PC-9 (cell line): ENCODE measurements at regions of chr12 and their contacts with region 1.

Region 1: GRCh38 chr12:111599459-111600204 is 517 bp upstream of the ATXN2 start:
- DNase-seq: peak; percentile 87 to 93
- H3K4me3 ChIP-seq: peak overlapping the region; percentile 98
- H3K27ac ChIP-seq: peak overlapping the region; percentile 94
- H3K4me1 ChIP-seq: peaks cover 46% of the 10 kb centered on the region
- H3K27me3 ChIP-seq: no peaks in the 10 kb centered on the region
- CTCF ChIP-seq: no peak

Region 2: DNA sequence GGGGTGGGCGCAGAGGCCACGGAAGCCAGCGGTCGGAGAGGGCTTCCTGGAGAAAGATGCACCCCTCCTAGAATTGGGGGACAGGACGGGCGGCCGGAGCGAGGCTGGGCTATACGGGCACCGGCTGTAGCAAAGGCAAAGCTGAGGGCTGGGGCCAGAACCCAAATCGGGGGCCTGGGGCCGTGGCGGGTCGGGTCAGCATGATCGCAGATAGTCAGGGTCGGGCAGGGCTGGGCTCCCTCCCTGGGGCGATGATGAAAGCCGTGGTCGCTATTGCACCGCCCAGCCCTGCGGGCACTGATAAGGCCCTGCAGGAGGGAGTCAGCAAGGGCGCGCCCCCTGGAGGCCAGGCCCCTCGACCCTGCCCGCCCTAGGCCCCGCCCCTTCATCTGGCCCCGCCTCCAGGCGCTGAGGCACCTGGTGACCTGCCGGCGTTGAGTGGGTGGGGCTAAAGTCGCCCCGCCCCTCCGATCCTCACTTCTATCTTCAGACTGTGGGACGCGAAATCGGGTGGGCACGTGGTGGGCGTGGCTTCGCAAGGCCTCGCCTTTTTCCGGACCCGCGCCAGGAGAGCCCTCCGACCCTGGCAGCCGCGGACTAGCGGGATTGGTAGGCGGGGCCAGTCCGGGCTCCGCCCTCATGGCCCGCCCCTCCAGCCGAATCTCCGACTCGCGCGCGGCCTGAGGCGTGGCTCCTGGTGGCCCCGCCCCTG is 194.3 kb before region 1 on chr12:
- CTCF ChIA-PET with region 1: no interaction called
- POLR2A ChIA-PET with region 1: no interaction called
- intact Hi-C with region 1: no loop called
- DNase-seq: peak; percentile 80 to 97
- H3K4me3 ChIP-seq: peak overlapping the region; percentile 97
- H3K27ac ChIP-seq: 0 out of 2 replicates have a peak overlapping the region, but pooled peaks have one; percentile 30
- H3K4me1 ChIP-seq: peaks cover 49% of the 10 kb centered on the region
- H3K27me3 ChIP-seq: no peaks in the 10 kb centered on the region
- CTCF ChIP-seq: peak; percentile 65

Region 3: GRCh38 chr12:111529424-111530368 is 69.9 kb before region 1 on chr12:
- CTCF ChIA-PET with region 1: no interaction called
- POLR2A ChIA-PET with region 1: no interaction called
- intact Hi-C with region 1: loop called (anchors 10 kb)
- DNase-seq: peak in 1 of 2 experiments; percentile 29
- H3K4me3 ChIP-seq: no peak overlapping the region
- H3K27ac ChIP-seq: 0 out of 2 replicates have a peak overlapping the region, but pooled peaks have one; percentile 7
- H3K4me1 ChIP-seq: no peaks in the 10 kb centered on the region
- H3K27me3 ChIP-seq: no peaks in the 10 kb centered on the region
- CTCF ChIP-seq: peak; percentile 72

Region 4: DNA sequence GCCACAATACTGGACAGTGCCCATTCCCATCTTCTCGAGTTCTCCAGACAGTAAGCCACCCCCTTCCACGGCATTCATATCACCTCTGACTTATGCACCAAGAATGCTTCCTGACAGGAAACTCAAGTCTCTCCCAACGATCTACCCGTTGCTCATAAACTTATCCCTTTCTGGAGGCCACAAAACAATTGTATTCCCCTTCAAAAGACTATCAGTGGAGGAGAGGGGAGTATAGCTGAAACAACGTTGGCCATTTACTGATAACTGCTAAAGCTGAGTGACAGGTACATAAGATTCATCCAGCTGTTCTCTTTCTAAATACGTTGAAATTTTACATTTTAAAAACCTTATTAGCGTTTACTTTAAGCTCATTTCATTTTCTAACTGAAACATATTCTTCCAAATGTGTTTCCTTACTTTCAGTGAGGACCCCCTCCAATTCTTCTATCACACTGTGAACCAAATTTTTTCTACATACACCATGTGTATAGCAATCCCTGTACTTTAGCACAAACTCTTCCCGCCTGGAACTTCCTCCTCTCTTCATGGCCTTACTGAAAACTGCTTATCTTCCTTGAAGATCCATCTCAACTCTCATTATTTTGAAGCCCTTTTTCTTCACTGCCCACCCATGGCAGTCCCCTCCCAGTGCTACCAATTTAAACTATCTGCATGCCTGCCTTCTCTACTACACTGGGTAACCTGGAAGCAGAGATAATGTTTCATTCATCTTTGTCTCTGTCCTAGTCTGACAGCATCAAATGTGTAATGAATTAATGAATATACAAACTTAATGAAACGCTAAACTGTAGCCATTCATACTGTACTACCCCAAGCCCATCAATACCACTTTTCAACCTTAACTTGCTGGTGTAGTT is 29.3 kb before region 1 on chr12:
- CTCF ChIA-PET with region 1: interaction called, 4 read pairs
- POLR2A ChIA-PET with region 1: interaction called, 4 read pairs
- intact Hi-C with region 1: loop called (anchors 2 kb)
- DNase-seq: peak; percentile 66 to 94
- H3K4me3 ChIP-seq: peak overlapping the region; percentile 4; the same call in 1 of the 2 replicates
- H3K27ac ChIP-seq: peak overlapping the region; percentile 74
- H3K4me1 ChIP-seq: peaks cover 52% of the 10 kb centered on the region
- H3K27me3 ChIP-seq: no peaks in the 10 kb centered on the region
- CTCF ChIP-seq: no peak

Region 5: GRCh38 chr12:111624540-111624939 is 24.9 kb after region 1 on chr12:
- CTCF ChIA-PET with region 1: no interaction called
- POLR2A ChIA-PET with region 1: no interaction called
- intact Hi-C with region 1: loop called (anchors 2 kb)
- DNase-seq: peak; percentile 75 to 94
- H3K4me3 ChIP-seq: no peak overlapping the region
- H3K27ac ChIP-seq: peak overlapping the region; percentile 86
- H3K4me1 ChIP-seq: peaks cover 22% of the 10 kb centered on the region
- H3K27me3 ChIP-seq: no peaks in the 10 kb centered on the region
- CTCF ChIP-seq: no peak

Region 6: DNA sequence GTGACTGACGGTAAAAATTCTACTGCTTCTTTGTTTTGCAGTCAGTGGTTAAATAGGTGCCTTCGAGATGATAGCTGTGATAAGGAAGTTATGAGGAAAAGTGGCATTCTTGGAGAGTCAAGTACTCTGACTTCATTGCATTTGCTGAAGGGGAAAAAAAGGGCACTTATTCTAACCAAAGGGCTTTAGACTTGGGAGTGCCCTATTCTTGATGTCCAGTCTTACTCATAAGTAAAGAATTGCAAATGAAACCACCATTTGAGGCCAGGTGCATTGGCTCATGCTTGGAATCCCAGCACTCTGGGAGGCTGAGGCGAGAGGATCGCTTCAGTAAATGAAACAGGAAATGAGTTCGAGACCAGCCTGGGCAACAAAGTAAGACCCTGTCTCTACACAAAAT is 45.8 kb after region 1 on chr12:
- CTCF ChIA-PET with region 1: no interaction called
- POLR2A ChIA-PET with region 1: interaction called, 5 read pairs
- intact Hi-C with region 1: loop called (anchors 1 kb)
- DNase-seq: peak; percentile 68 to 99
- H3K4me3 ChIP-seq: no peak overlapping the region
- H3K27ac ChIP-seq: peak overlapping the region; percentile 88
- H3K4me1 ChIP-seq: peaks cover 28% of the 10 kb centered on the region
- H3K27me3 ChIP-seq: no peaks in the 10 kb centered on the region
- CTCF ChIP-seq: no peak

Region 7: DNA sequence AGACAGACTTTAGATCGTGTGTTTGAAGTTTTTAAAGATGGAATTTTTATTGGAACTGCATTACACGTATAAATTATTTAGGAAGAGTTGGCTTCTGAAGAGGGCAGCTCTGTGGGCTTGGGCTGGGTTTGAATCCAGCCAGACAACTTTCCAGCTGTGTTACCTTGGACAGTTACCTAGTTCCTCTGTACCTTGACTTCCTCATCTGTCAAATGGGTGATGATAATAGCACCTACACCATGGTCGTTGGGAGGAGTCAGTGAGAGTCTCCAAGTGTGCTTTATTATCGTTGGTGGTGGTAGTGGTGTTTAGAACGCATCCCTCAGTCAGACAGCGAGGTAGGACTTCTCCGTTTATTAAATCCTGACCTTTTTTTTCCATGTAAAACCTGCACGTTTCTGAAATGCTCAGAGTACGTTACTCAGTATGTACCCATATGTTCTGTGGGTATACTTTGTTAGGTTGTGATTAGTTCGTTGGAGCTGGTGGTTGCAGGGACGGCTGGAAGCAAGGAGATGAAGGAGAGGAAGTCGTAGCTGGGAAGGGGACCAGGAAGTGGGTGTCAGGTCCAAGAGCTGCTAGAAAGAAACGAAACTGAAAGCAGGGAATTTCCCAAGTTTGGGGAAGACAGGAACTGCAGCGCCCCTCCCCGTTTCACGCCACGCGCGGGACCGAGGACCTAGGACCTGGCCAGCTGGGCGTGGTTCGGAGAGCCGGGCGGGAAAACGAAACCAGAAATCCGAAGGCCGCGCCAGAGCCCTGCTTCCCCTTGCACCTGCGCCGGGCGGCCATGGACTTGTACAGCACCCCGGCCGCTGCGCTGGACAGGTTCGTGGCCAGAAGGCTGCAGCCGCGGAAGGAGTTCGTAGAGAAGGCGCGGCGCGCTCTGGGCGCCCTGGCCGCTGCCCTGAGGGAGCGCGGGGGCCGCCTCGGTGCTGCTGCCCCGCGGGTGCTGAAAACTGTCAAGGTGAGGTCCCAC is 1338.4 kb after region 1 on chr12 and contains the start of gene OAS3:
- CTCF ChIA-PET with region 1: no interaction called
- POLR2A ChIA-PET with region 1: interaction called, 15 read pairs
- intact Hi-C with region 1: no loop called
- DNase-seq: peak; percentile 50 to 68
- H3K4me3 ChIP-seq: peak within 1 kb of the TSS; percentile 73
- H3K27ac ChIP-seq: peak within 1 kb of the TSS; percentile 1; the same call in 1 of the 2 replicates
- H3K4me1 ChIP-seq: peaks cover 29% of the 10 kb centered on the region
- H3K27me3 ChIP-seq: no peaks in the 10 kb centered on the region
- CTCF ChIP-seq: no peak
- total RNA-seq, gene OAS3: 16.2 and 17.4 TPM in 2 replicates